Common myeloid progenitor, CD34-positive (primary cell): ENCODE measurements at regions of chr1 and their contacts with region 1.

Region 1: GRCh38 chr1:202852163-202852904 is 36.6 kb downstream of the RABIF start:
- DNase-seq: peak; percentile 84 to 90 (median 87)
- H3K4me3 ChIP-seq: no peak overlapping the region
- H3K27ac ChIP-seq: no peak overlapping the region
- H3K4me1 ChIP-seq: peaks cover 0 to 18% (median 13%) of the 10 kb centered on the region in 4 experiments
- H3K27me3 ChIP-seq: no peaks in the 10 kb centered on the region

Region 2: GRCh38 chr1:202750758-202751157 is 101.6 kb before region 1 on chr1:
- CTCF ChIA-PET with region 1: interaction called, 37 read pairs
- POLR2A ChIA-PET with region 1: no interaction called
- DNase-seq: peak in 2 of 3 donors; percentile 38 to 41
- H3K4me3 ChIP-seq: no peak overlapping the region
- H3K27ac ChIP-seq: no peak overlapping the region
- H3K4me1 ChIP-seq: no peaks in the 10 kb centered on the region
- H3K27me3 ChIP-seq: no peaks in the 10 kb centered on the region

Region 3: GRCh38 chr1:202781180-202781579 is 71.2 kb before region 1 on chr1:
- CTCF ChIA-PET with region 1: interaction called, 21 read pairs
- POLR2A ChIA-PET with region 1: no interaction called
- DNase-seq: no peak
- H3K4me3 ChIP-seq: no peak overlapping the region
- H3K27ac ChIP-seq: no peak overlapping the region
- H3K4me1 ChIP-seq: peaks cover 0 to 6% (median 4%) of the 10 kb centered on the region in 4 experiments
- H3K27me3 ChIP-seq: no peaks in the 10 kb centered on the region

Region 4: DNA sequence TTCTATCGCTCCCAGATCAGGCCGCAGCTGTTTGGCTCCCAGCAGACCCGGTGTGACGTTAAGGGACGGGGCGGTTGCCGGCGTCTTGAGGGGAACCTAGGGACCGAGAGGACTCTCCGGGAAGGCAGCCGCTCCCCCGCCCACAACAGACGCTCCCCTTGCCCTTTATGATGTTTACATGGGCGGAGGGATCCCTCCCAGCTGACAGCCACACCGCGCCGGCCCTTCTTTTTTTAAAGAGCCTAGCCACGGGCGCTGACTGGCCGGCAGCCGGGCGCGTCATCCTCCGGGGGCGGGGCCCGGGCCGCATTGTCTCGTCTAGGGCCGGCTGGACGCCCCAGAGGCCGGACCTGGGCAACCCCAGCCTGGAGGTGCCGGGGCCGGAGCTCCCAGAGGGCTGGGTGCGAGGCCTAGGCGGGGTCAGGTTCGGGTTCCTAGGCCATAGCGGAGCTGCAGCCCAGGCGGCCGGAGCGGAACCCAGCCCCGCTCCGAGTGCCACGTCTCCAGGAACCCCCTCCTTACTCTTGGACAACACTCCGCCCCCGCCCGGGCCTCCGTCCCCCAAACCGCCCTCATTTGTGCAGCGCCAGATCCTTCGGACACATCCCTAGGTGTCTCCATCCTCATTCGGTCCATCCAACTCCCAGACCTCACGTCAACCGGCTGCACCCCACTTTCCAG is 41.6 kb before region 1 on chr1 and contains the start of gene PCAT6:
- CTCF ChIA-PET with region 1: interaction called, 24 read pairs
- POLR2A ChIA-PET with region 1: no interaction called
- DNase-seq: peak; percentile 93 to 97 (median 95)
- H3K4me3 ChIP-seq: peak within 1 kb of the TSS; percentile 73 to 90 (median 85)
- H3K27ac ChIP-seq: peak within 1 kb of the TSS in 1 of 2 experiments; percentile 79
- H3K4me1 ChIP-seq: peaks cover 8 to 36% (median 23%) of the 10 kb centered on the region in 4 experiments
- H3K27me3 ChIP-seq: peaks cover 0 to 4% (median 0%) of the 10 kb centered on the region in 5 experiments

Region 5: DNA sequence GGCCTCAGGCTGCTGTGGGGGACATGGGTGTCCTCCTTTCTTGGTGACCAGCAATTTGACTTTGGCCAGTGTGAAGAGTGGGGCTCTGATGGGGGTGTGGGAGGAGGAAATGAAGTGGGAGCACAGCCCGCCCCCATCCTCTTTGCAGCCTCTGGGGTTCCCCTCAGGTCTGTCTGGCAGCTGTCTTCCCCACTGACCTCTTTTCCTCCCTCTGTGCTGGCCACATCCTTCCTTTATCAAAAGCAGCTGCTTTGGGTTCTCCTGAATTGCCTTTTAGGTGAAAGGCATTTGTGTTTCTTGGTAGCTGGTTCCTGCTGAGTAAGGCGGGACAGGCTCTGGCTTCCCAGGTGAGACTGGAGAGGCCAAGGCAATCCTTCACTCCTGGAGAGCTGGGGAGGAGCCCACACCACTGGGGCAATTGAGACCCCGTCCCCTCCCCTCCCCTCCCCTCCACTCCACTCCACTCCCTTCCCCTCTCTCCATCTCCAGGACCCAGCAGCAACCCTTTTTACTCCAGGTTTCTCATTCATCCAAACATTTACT is 16.7 kb before region 1 on chr1:
- CTCF ChIA-PET with region 1: interaction called, 27 read pairs
- POLR2A ChIA-PET with region 1: interaction called, 4 read pairs
- DNase-seq: peak; percentile 40 to 85 (median 85)
- H3K4me3 ChIP-seq: peak overlapping the region in 4 of 7 experiments; percentile 12 to 46 (median 38)
- H3K27ac ChIP-seq: no peak overlapping the region
- H3K4me1 ChIP-seq: peaks cover 0 to 65% (median 37%) of the 10 kb centered on the region in 4 experiments
- H3K27me3 ChIP-seq: no peaks in the 10 kb centered on the region

Region 6: GRCh38 chr1:203026031-203026989 is 174.0 kb after region 1 on chr1 and contains the start of gene PPFIA4:
- CTCF ChIA-PET with region 1: no interaction called
- POLR2A ChIA-PET with region 1: no interaction called
- DNase-seq: peak; percentile 82 to 91 (median 89)
- H3K4me3 ChIP-seq: peak within 1 kb of the TSS in 6 of 7 experiments; percentile 58 to 83 (median 66)
- H3K27ac ChIP-seq: no peak within 1 kb of the TSS
- H3K4me1 ChIP-seq: peaks cover 0 to 14% (median 8%) of the 10 kb centered on the region in 4 experiments
- H3K27me3 ChIP-seq: peaks cover 3 to 24% (median 21%) of the 10 kb centered on the region in 5 experiments

Region 7: GRCh38 chr1:203504397-203505250 is 652.3 kb after region 1 on chr1:
- CTCF ChIA-PET with region 1: no interaction called
- POLR2A ChIA-PET with region 1: no interaction called
- DNase-seq: peak; percentile 65 to 82 (median 72)
- H3K4me3 ChIP-seq: no peak overlapping the region
- H3K27ac ChIP-seq: no peak overlapping the region
- H3K4me1 ChIP-seq: no peaks in the 10 kb centered on the region
- H3K27me3 ChIP-seq: peaks cover 0 to 9% (median 3%) of the 10 kb centered on the region in 5 experiments